Left cardiac atrium (tissue), 4 donors: ENCODE measurements at regions of chr10 and their contacts with region 1.

Region 1: GRCh38 chr10:4093438-4093837 is 308.4 kb upstream of the KLF6 start:
- DNase-seq: no peak
- ATAC-seq: no peak

Region 2: DNA sequence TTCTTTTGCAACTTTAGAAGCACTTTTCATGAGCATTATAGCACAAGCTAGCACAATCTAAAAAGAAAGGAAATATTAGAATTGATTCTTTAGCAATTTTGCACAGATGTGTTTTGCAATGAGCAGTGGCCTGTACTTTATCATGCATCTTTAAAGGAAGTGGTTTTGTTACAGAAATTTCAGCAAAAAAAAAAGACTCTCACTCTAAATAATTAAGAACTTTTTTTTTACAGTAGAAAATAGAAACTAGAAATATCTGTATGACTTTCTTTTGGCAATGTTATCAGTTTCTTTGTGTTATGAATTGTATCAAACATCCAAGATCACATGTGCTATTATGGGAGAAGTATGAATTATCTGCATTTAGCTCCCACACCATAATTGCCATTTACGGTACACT is 112.8 kb before region 1 on chr10:
- intact Hi-C with region 1: no loop called
- DNase-seq: no peak
- ATAC-seq: no peak

Region 3: DNA sequence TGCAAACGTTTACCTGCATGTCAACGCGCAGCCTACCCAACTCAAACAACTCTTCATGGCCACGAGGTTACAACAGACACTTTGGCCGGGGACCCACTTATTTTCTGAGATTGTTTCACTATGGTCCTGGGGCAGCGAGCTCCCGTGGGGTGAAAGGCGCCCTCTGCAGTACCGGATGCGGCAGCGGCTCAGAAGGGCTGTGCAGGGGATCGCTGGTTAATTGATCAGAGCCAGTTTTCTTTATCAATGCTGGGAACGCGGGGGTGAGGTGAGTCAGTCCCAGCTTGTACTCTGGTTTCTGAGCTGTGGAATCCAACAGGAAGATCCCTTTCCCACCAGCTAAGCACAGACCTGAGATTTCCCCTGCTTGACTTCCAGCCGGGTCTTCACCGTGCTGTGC is 58.0 kb after region 1 on chr10:
- intact Hi-C with region 1: no loop called
- DNase-seq: no peak
- ATAC-seq: no peak

Region 4: DNA sequence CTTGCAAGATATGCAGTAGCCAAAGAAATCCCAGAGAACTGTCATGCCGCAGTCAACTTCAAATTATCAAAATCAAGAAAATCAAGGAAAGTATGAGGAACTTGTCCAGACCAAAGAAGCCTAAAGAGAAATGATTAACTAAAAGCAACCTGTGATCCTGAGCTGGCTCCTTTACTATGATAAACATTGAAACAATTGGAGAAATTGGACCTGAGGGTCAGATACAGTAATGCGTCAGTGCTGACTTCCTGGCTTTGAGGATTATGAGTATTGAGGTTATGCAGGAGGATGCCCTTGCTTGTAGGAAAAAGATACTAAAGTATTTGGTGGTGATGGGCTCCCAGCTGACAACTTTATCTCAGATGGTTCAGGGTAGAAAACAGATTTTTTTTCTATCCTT is 407.9 kb after region 1 on chr10:
- intact Hi-C with region 1: loop called in 1 of 2 experiments (anchors 10 kb)
- DNase-seq: no peak
- ATAC-seq: no peak